SK-N-SH (cell line): ENCODE measurements at regions of chr17 and their contacts with region 1.

Region 1: GRCh38 chr17:50129728-50130558 is at the start of gene SAMD14:
- DNase-seq: peak; percentile 96
- H3K4me3 ChIP-seq: peak within 1 kb of the TSS; percentile 61 to 70
- H3K27ac ChIP-seq: peak within 1 kb of the TSS in 1 of 2 experiments; percentile 69; a peak in 1 of 4 replicates
- H3K4me1 ChIP-seq: peaks cover 20 to 23% of the 10 kb centered on the region in 2 experiments; a peak in 3 of 4 replicates
- H3K27me3 ChIP-seq: no peaks in the 10 kb centered on the region
- CTCF ChIP-seq: no peak
- EP300 ChIP-seq: no peak
- RAD21 ChIP-seq: no peak
- polyA plus RNA-seq, gene SAMD14: 2.8 and 3.4 TPM in 2 replicates

Region 2: GRCh38 chr17:50114849-50115357 is 15.0 kb before region 1 on chr17:
- CTCF ChIA-PET with region 1: interaction called, 116 read pairs
- POLR2A ChIA-PET with region 1: interaction called, 13 read pairs
- DNase-seq: peak; percentile 79
- H3K4me3 ChIP-seq: no peak overlapping the region
- H3K27ac ChIP-seq: no peak overlapping the region
- H3K4me1 ChIP-seq: peaks cover 0 to 24% of the 10 kb centered on the region in 2 experiments; a peak in 1 of 4 replicates
- H3K27me3 ChIP-seq: no peaks in the 10 kb centered on the region
- CTCF ChIP-seq: peak; percentile 93
- EP300 ChIP-seq: no peak
- RAD21 ChIP-seq: peak; percentile 75

Region 3: DNA sequence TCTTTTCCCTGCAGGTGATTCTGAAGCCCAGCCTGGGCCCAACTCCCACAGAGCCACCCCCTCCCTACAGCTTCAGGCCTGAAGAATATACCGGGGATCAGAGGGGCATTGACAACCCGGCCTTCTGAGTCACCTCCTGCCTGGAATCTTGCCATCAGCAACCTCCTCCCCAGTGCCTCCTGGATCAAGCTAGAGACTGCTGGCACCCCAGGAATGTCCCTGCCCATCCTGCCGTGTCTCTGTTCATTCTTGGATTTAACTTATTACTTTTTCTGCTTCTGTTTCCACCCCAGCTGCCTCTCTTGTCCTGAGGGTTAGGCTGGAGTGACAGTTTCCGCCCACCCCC is 149.2 kb after region 1 on chr17:
- CTCF ChIA-PET with region 1: no interaction called
- POLR2A ChIA-PET with region 1: no interaction called
- DNase-seq: no peak
- H3K4me3 ChIP-seq: no peak overlapping the region
- H3K27ac ChIP-seq: peak overlapping the region; percentile 20; a peak in 2 of 4 replicates
- H3K4me1 ChIP-seq: peaks cover 7 to 26% of the 10 kb centered on the region in 2 experiments; a peak in 3 of 4 replicates
- H3K27me3 ChIP-seq: no peaks in the 10 kb centered on the region
- CTCF ChIP-seq: no peak
- EP300 ChIP-seq: no peak; a peak in 1 of 4 replicates
- RAD21 ChIP-seq: no peak

Region 4: GRCh38 chr17:50468409-50469207 is 338.7 kb after region 1 on chr17 and contains the start of gene CHAD:
- CTCF ChIA-PET with region 1: no interaction called
- POLR2A ChIA-PET with region 1: no interaction called
- DNase-seq: peak; percentile 87
- H3K4me3 ChIP-seq: peak within 1 kb of the TSS in 1 of 2 experiments; percentile 41; a peak in 2 of 4 replicates
- H3K27ac ChIP-seq: no peak within 1 kb of the TSS
- H3K4me1 ChIP-seq: peaks cover 0 to 17% of the 10 kb centered on the region in 2 experiments; a peak in 1 of 4 replicates
- H3K27me3 ChIP-seq: no peaks in the 10 kb centered on the region
- CTCF ChIP-seq: no peak
- EP300 ChIP-seq: no peak
- RAD21 ChIP-seq: no peak
- polyA plus RNA-seq, gene CHAD: not detected in 2 replicates